Cardiac septum (tissue), 1 donor: ENCODE measurements at regions of chr15 and their contacts with region 1.

Region 1: DNA sequence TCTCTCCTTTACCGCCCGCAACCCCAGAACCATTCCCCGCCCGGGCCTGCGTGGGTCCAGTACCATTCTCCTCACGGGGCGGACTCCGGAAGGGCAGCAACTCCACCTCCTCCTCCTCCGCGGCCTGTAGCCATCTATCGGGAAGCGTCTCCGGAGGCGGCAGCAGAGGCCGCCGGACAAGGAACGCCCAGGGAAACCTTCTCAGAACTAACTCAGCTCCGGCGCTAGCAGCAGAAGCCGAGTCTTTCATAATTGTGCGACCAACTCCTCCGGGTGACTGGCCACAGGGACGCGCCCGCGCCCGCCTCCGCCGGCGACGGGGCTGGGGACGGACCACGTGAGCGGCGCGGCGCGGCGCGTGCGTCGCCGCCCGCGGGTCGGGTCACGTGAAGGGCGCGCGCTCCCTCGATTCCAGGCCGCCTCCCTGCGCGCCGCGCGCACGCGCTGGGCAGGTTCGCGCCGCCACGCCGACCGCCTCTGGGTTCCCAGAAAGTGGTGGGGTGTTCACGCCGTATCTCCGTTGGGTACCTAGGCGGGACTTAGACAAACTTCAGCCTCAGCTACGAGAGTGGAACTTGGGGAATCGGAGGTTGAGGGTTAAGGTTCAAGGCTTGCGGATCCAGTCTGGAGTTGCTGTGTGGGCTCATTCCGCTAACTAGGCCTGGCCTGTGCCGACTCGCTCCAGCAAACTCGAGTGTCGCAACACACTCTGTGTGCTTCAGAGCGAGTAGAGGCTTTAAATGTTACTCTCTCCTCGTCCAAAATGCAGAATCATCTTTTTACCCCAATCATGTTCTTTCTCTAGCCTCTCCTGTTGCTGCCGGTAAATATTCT is at the start of gene TRPM7:
- DNase-seq: peak; percentile 95
- total RNA-seq, gene TRPM7: 34.5 TPM

Region 2: GRCh38 chr15:50908210-50909009 is 221.7 kb after region 1 on chr15 and contains the start of gene AP4E1:
- intact Hi-C with region 1: loop called (anchors 5 kb)
- DNase-seq: peak; percentile 97
- total RNA-seq, gene AP4E1: 9.9 TPM